ENCODE measurements at regions of chr15 and their contacts with region 1.

Region 1: GRCh38 chr15:48358229-48358641 is 27.0 kb downstream of the DUT start:
- DNase-seq: peak in 1 of 4 experiments; percentile 19
- ATAC-seq: peak; percentile 66
- H3K4me3 ChIP-seq: no peak overlapping the region
- H3K27ac ChIP-seq: no peak overlapping the region
- H3K4me1 ChIP-seq: peaks cover 0 to 4% of the 10 kb centered on the region in 2 experiments; a peak in 3 of 5 replicates
- H3K27me3 ChIP-seq: no peaks in the 10 kb centered on the region
- CTCF ChIP-seq: peak; percentile 38 to 79 (median 52); a peak in 4 of 6 replicates
- EP300 ChIP-seq: no peak
- POLR2A ChIP-seq: no peak
- RAD21 ChIP-seq: peak; percentile 86 to 89

Region 2: DNA sequence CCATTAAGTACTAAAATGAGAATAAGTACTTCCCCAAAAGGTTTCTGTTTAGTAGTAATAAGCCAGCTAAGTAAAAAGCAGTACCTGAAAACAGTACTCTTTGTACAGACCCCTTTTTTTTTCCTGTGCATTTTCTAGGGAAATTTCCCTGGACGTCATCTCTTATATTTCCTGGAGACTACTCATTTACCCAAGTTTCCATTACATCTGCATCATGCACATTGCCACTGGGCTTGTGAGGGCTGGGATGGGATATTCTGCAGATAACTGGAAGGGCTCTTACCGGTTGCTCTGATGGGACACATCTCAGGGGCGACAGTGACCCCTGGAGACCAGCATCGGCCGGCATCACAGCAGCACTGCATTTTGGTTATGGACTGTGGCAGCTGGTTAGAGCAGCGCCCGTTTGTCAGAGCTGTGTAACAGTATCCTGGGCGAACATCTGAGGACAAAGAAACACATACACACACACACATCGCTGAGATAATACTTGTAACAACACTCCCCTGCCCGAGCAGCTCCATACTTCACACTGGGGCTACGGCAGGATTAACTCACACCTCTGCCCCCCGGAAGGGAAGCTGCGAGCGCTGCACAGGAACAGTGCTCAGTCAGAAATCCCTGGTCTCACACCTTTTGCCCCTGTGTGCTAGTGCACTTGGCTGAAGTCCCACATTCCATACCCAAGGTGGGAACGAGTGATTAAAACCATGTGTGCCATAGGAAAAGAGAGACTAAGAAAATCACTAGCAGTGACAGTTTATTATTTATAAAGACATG is 162.3 kb after region 1 on chr15:
- CTCF ChIA-PET with region 1: interaction called, 3 read pairs
- POLR2A ChIA-PET with region 1: no interaction called
- in situ Hi-C with region 1: no loop called
- intact Hi-C with region 1: loop called (anchors 5 kb)
- DNase-seq: peak in 2 of 4 experiments; percentile 15 to 34
- ATAC-seq: peak; percentile 90
- H3K4me3 ChIP-seq: no peak overlapping the region
- H3K27ac ChIP-seq: no peak overlapping the region
- H3K4me1 ChIP-seq: no peaks in the 10 kb centered on the region
- H3K27me3 ChIP-seq: no peaks in the 10 kb centered on the region; a peak in 1 of 5 replicates
- CTCF ChIP-seq: peak; percentile 38 to 47 (median 41); a peak in 5 of 6 replicates
- EP300 ChIP-seq: no peak
- POLR2A ChIP-seq: no peak
- RAD21 ChIP-seq: peak in 1 of 2 experiments; percentile 48; a peak in 2 of 4 replicates

Region 3: GRCh38 chr15:48641416-48641815 is 283.2 kb after region 1 on chr15:
- CTCF ChIA-PET with region 1: interaction called, 3 read pairs
- POLR2A ChIA-PET with region 1: no interaction called
- in situ Hi-C with region 1: no loop called
- intact Hi-C with region 1: loop called (anchors 1 kb)
- DNase-seq: peak in 1 of 4 experiments; percentile 16
- ATAC-seq: peak; percentile 44; the same call in 1 of the 3 replicates
- H3K4me3 ChIP-seq: no peak overlapping the region
- H3K27ac ChIP-seq: no peak overlapping the region
- H3K4me1 ChIP-seq: no peaks in the 10 kb centered on the region; a peak in 1 of 5 replicates
- H3K27me3 ChIP-seq: no peaks in the 10 kb centered on the region
- CTCF ChIP-seq: peak in 1 of 3 experiments; percentile 54; a peak in 2 of 6 replicates
- EP300 ChIP-seq: no peak
- POLR2A ChIP-seq: no peak
- RAD21 ChIP-seq: peak; percentile 50 to 58

Region 4: GRCh38 chr15:48696627-48697312 is 338.5 kb after region 1 on chr15:
- CTCF ChIA-PET with region 1: no interaction called
- POLR2A ChIA-PET with region 1: no interaction called
- in situ Hi-C with region 1: no loop called
- intact Hi-C with region 1: loop called (anchors 2 kb)
- DNase-seq: peak in 3 of 4 experiments; percentile 12 to 45 (median 17)
- ATAC-seq: peak; percentile 82
- H3K4me3 ChIP-seq: no peak overlapping the region
- H3K27ac ChIP-seq: peak overlapping the region; percentile 38; the same call in 2 of the 3 replicates
- H3K4me1 ChIP-seq: peaks cover 0 to 22% of the 10 kb centered on the region in 2 experiments; a peak in 2 of 5 replicates
- H3K27me3 ChIP-seq: no peaks in the 10 kb centered on the region
- CTCF ChIP-seq: peak in 1 of 3 experiments; percentile 14; a peak in 2 of 6 replicates
- EP300 ChIP-seq: no peak
- POLR2A ChIP-seq: no peak
- RAD21 ChIP-seq: peak in 1 of 2 experiments; percentile 57; a peak in 2 of 4 replicates

Region 5: DNA sequence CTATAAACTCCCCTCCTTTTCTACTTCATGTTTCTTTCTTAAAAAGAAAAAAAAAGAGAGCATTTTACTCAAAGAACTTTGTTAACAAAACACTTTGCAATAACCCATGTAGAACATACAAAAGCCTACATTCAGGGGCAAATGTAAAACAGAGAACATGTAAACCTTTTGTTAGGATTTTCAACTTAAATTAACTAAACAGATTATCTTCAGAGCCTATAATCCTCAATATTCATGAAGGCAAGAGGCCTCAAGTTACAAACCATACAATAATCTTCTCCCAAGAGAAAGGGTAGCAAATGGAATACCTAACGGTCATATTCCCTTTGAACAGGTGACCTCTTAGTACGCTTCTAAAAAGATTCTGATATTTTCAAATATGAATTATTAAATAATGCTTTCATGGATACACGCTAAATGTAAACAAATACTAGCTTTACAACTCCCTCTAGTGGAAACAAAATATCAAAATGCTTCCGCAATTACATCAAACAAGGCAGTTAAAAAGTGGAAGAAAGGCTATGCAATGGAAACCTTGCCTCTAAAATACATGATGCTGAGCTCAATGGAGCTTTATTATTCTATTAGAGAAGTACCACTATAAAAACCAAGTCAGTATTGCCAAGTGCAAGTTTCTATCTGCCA is 442.7 kb after region 1 on chr15:
- CTCF ChIA-PET with region 1: interaction called, 4 read pairs
- POLR2A ChIA-PET with region 1: no interaction called
- in situ Hi-C with region 1: loop called (anchors 25 kb)
- intact Hi-C with region 1: loop called (anchors 5 kb)
- DNase-seq: peak in 2 of 4 experiments; percentile 10 to 13
- ATAC-seq: peak; percentile 50; the same call in 1 of the 3 replicates
- H3K4me3 ChIP-seq: no peak overlapping the region
- H3K27ac ChIP-seq: no peak overlapping the region
- H3K4me1 ChIP-seq: peaks cover 0 to under 1% of the 10 kb centered on the region in 2 experiments; a peak in 1 of 5 replicates
- H3K27me3 ChIP-seq: no peaks in the 10 kb centered on the region
- CTCF ChIP-seq: peak in 1 of 3 experiments; percentile 62; a peak in 4 of 6 replicates
- EP300 ChIP-seq: no peak
- POLR2A ChIP-seq: no peak
- RAD21 ChIP-seq: peak; percentile 63 to 68

Region 6: DNA sequence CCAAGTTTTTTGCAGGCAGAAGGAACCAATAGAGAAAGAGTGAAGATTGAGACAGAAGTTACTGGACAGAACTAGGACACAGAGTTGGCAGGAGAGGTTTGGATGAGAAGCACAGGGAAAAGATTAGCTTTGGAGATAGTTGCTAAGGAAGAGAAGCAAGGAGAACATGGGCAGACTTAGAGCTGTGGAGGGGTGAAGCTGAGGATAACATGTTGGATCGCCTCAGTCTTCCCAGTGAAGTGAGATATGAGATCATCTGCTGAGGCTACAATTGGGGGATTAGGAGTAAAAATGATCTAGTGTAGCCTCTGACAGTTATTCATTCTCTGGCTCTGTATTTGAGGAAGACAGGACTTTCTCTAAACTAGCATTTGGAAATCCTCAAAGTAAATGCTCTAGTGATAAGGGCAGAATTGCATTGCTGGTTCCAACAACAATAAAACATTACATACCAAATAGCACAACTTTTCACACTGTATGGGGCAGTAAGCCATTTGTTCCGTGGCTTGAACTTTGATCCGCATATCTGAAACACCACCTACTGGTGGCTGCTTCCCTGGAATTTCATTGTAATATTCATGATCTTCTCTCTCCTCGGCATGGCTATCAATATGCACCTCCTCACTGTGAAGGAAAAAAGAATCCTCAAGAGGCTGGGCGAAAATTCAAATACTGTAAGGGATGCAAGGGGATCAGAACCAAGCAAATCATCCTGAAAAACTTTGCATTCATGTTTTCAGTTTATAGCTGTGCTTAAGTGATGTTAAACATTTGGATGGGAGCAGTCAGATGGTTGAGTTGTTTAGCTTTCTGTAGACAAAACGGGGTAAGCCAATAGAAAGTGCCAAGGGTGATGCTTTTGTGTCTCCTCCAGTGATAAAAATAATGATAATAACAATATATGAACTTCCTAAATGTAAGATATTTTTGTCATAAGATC is 497.5 kb after region 1 on chr15:
- CTCF ChIA-PET with region 1: no interaction called
- POLR2A ChIA-PET with region 1: no interaction called
- in situ Hi-C with region 1: no loop called
- intact Hi-C with region 1: loop called (anchors 1 kb)
- DNase-seq: peak in 3 of 4 experiments; percentile 15 to 65 (median 40)
- ATAC-seq: peak; percentile 83
- H3K4me3 ChIP-seq: no peak overlapping the region
- H3K27ac ChIP-seq: no peak overlapping the region
- H3K4me1 ChIP-seq: peaks cover 0 to 31% of the 10 kb centered on the region in 2 experiments; a peak in 4 of 5 replicates
- H3K27me3 ChIP-seq: no peaks in the 10 kb centered on the region
- CTCF ChIP-seq: peak; percentile 48 to 66 (median 64); a peak in 5 of 6 replicates
- EP300 ChIP-seq: no peak
- POLR2A ChIP-seq: no peak
- RAD21 ChIP-seq: peak; percentile 58 to 80